Activated CD4-positive, alpha-beta memory T cell treated with anti-CD3 and anti-CD28 coated beads for 36 hours (primary cell): ENCODE measurements at regions of chr12 and their contacts with region 1.

Region 1: DNA sequence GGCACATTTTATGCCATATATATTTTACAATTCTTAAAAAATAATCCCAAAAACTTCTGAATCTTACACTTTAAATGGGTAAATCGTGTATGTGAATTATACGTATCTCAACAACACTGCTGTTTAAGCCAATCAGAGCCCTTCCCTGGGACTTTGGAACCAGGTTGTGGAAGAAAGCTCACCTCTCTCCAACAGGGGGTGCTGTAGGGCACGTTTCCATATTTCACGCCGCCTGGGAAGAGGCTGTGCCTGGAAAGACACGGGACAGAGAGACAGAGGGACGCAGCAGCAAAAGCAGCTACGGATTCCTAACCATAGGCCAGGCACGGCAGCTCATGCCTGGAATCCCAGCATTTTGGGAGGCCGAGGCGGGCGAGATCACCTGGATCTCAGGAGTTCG is 29.4 kb upstream of the FBRSL1 start:
- DNase-seq: peak; percentile 39
- H3K4me3 Mint-ChIP-seq: no peak overlapping the region
- H3K27ac Mint-ChIP-seq: no peak overlapping the region
- H3K4me1 Mint-ChIP-seq: no peaks in the 10 kb centered on the region
- H3K27me3 Mint-ChIP-seq: no peaks in the 10 kb centered on the region

Region 2: DNA sequence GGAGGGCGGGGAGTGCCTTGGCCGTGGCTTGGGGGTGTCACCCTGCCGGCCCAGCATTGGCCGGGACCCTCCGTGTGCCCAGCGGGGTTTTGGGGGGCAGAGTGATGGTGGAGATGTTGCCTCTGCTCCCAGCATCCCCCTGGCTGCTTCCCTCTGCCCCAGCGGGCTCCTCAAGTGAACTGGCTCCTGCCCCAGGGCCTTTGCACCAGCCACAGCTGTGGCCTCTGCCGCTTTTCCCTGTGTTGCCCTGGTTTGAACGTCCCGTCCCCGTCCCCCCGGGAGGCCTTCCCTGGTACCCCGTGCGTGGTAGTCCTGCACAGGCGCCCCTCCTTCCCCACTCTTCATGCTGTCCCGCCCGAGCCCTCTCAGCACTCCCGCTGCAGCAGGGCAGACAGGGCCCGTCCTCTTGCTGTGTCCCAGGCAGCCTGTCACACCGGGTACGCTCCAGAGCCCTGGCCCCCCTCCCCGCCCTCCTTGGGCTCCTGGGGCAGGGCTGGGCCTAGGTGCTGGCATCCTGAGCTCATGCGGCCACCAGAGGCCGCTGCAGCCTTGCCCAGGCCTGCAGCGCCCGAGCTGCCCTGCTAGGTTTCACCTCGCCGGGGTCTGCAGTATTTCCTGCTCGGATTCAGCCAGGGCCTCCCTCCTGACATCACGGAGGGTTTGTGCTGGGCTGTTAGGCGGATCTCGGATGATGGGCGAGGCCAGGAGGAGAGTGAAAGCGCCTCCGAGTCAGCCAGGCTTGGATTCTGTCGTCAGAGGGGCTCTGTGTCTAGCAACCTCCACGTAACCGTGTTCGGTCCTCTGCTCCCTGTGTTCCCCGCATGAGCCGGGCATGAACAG is 306.9 kb before region 1 on chr12:
- CTCF ChIA-PET with region 1: no interaction called
- POLR2A ChIA-PET with region 1: no interaction called
- intact Hi-C with region 1: no loop called
- DNase-seq: peak; percentile 75
- H3K4me3 Mint-ChIP-seq: no peak overlapping the region
- H3K27ac Mint-ChIP-seq: no peak overlapping the region
- H3K4me1 Mint-ChIP-seq: no peaks in the 10 kb centered on the region
- H3K27me3 Mint-ChIP-seq: no peaks in the 10 kb centered on the region

Region 3: GRCh38 chr12:132373901-132374611 is 86.5 kb before region 1 on chr12:
- CTCF ChIA-PET with region 1: no interaction called
- POLR2A ChIA-PET with region 1: no interaction called
- intact Hi-C with region 1: no loop called
- DNase-seq: no peak
- H3K4me3 Mint-ChIP-seq: no peak overlapping the region
- H3K27ac Mint-ChIP-seq: no peak overlapping the region
- H3K4me1 Mint-ChIP-seq: no peaks in the 10 kb centered on the region
- H3K27me3 Mint-ChIP-seq: peaks cover 45% of the 10 kb centered on the region

Region 4: GRCh38 chr12:132429946-132430643 is 30.5 kb before region 1 on chr12:
- CTCF ChIA-PET with region 1: no interaction called
- POLR2A ChIA-PET with region 1: no interaction called
- intact Hi-C with region 1: no loop called
- DNase-seq: peak; percentile 71
- H3K4me3 Mint-ChIP-seq: peak overlapping the region; percentile 48
- H3K27ac Mint-ChIP-seq: no peak overlapping the region
- H3K4me1 Mint-ChIP-seq: peaks cover 21% of the 10 kb centered on the region
- H3K27me3 Mint-ChIP-seq: no peaks in the 10 kb centered on the region

Region 5: GRCh38 chr12:132523576-132524331 is 63.2 kb after region 1 on chr12:
- CTCF ChIA-PET with region 1: interaction called, 10 read pairs
- POLR2A ChIA-PET with region 1: no interaction called
- intact Hi-C with region 1: loop called (anchors 10 kb)
- DNase-seq: peak; percentile 81
- H3K4me3 Mint-ChIP-seq: no peak overlapping the region
- H3K27ac Mint-ChIP-seq: no peak overlapping the region
- H3K4me1 Mint-ChIP-seq: peaks cover 2% of the 10 kb centered on the region
- H3K27me3 Mint-ChIP-seq: no peaks in the 10 kb centered on the region

Region 6: DNA sequence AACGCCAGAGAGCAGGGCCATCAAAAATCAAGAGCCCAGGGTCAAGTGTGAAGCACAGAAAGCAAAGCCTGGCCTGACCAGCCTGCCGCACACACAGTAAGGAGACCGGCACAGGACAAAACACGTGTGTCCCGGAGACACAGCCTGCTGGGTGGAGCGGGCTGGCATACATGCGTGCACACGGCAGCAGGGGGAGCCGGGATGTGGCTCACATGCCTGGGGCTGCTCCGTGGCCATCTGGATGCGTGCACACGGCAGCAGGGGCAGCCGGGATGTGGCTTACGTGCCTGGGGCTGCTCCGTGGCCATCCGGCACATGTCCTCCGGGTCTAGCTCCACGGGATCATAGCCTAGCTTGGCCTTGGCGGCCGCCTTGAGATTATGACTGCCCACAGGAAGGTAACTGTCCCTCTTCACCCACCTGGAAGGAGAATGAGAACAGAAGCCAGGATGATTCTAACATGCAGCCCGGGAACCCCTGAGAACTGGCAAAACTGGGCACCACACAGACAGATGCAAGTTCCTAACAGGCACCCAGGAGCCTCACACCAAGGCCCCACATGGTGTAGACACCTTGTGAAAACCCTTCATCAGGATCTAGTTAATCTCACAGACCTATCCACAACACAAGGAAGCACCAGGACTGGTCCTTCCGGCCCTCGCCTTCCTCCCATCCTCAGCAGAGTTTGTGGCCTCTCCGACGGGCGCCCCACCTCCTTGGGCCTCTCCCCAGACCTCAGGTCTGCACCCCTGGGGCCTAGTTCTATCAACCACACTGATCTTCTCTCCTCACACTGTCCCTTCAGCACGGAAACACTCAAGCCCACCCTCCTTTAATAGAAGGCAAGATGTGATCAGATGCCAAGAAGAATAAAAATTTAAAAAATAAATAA is 213.0 kb after region 1 on chr12:
- CTCF ChIA-PET with region 1: no interaction called
- POLR2A ChIA-PET with region 1: no interaction called
- intact Hi-C with region 1: no loop called
- DNase-seq: no peak
- H3K4me3 Mint-ChIP-seq: no peak overlapping the region
- H3K27ac Mint-ChIP-seq: no peak overlapping the region
- H3K4me1 Mint-ChIP-seq: peaks cover 2% of the 10 kb centered on the region
- H3K27me3 Mint-ChIP-seq: no peaks in the 10 kb centered on the region